PC-9 (cell line): ENCODE measurements at regions of chr7 and their contacts with region 1.

Region 1: GRCh38 chr7:13050703-13051102 is 363.3 kb downstream of the ARL4A start:
- DNase-seq: no peak
- H3K4me3 ChIP-seq: no peak overlapping the region
- H3K27ac ChIP-seq: peak overlapping the region; percentile 14; the same call in 1 of the 2 replicates
- H3K4me1 ChIP-seq: peaks cover 23% of the 10 kb centered on the region
- H3K27me3 ChIP-seq: no peaks in the 10 kb centered on the region
- CTCF ChIP-seq: no peak

Region 2: GRCh38 chr7:12961910-12962480 is 88.7 kb before region 1 on chr7:
- CTCF ChIA-PET with region 1: no interaction called
- POLR2A ChIA-PET with region 1: interaction called, 14 read pairs
- intact Hi-C with region 1: no loop called
- DNase-seq: no peak
- H3K4me3 ChIP-seq: no peak overlapping the region
- H3K27ac ChIP-seq: no peak overlapping the region
- H3K4me1 ChIP-seq: peaks cover 6% of the 10 kb centered on the region; the same call in 1 of the 2 replicates
- H3K27me3 ChIP-seq: no peaks in the 10 kb centered on the region
- CTCF ChIP-seq: no peak

Region 3: DNA sequence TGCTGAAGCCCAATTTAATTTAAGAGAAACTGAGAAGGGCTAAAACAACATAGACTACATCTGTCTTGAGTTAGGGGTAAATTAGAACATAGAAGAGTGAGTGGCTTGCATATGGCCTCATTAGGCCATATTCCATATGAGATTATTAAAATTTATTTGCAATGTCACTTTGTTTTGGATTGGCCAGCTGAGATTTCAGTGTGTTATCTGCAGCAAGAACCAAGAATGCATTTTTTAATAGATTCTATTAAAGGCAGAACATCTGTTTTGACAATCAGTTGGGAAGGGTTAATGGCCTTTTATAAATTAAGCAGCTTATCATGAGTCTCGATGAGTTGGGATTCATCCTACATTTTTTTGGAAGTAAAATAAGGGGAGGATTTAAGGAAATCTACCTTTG is 1615.6 kb after region 1 on chr7:
- CTCF ChIA-PET with region 1: no interaction called
- POLR2A ChIA-PET with region 1: no interaction called
- intact Hi-C with region 1: no loop called
- DNase-seq: no peak
- H3K4me3 ChIP-seq: no peak overlapping the region
- H3K27ac ChIP-seq: no peak overlapping the region
- H3K4me1 ChIP-seq: no peaks in the 10 kb centered on the region
- H3K27me3 ChIP-seq: no peaks in the 10 kb centered on the region
- CTCF ChIP-seq: no peak